ENCODE measurements at regions of chr6 and their contacts with region 1.

Region 1: DNA sequence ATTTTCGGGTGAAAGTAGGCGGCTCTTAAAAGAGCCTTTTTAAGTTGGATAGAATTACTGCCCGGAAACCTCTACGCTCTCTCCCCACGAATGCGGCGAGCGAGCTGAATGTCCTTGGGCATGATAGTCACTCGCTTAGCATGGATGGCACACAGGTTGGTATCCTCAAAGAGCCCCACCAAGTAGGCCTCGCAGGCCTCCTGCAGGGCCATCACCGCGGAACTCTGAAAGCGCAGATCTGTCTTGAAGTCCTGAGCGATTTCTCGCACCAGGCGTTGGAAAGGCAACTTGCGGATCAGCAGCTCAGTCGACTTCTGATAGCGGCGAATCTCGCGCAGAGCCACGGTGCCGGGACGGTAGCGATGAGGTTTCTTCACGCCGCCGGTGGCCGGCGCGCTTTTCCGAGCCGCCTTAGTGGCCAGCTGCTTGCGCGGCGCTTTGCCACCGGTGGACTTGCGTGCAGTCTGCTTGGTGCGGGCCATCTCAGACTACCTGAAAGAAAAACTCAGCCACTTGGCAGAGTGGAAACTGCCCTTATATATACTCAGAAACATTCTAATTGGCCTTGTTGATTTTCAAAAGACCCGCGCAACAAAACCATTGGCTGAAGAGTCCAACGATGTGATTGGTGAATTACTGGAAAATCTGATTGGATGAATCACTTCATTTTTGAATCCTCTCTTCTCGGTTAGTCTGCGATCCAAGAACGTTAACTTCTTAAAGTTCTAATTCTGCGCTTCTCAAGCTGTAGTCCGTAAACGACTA is 93.9 kb upstream of the BTN3A2 start:
- DNase-seq: peak; percentile 87
- H3K4me3 ChIP-seq: peak overlapping the region; percentile 66 to 75
- H3K27ac ChIP-seq: peak overlapping the region; percentile 84 to 99
- H3K4me1 ChIP-seq: peaks cover 0 to 14% of the 10 kb centered on the region in 2 experiments; a peak in 2 of 4 replicates
- H3K27me3 ChIP-seq: no peaks in the 10 kb centered on the region
- CTCF ChIP-seq: no peak
- EP300 ChIP-seq: peak in 1 of 2 experiments; percentile 40; a peak in 1 of 4 replicates
- RAD21 ChIP-seq: no peak

Region 2: GRCh38 chr6:26020329-26021000 is 250.6 kb before region 1 on chr6:
- CTCF ChIA-PET with region 1: no interaction called
- POLR2A ChIA-PET with region 1: interaction called, 11 read pairs
- DNase-seq: peak; percentile 87
- H3K4me3 ChIP-seq: peak overlapping the region; percentile 78 to 84
- H3K27ac ChIP-seq: peak overlapping the region; percentile 93 to 99
- H3K4me1 ChIP-seq: peaks cover 0 to 19% of the 10 kb centered on the region in 2 experiments; a peak in 2 of 4 replicates
- H3K27me3 ChIP-seq: no peaks in the 10 kb centered on the region
- CTCF ChIP-seq: no peak
- EP300 ChIP-seq: no peak
- RAD21 ChIP-seq: no peak

Region 3: GRCh38 chr6:26103770-26104456 is 167.2 kb before region 1 on chr6:
- CTCF ChIA-PET with region 1: no interaction called
- POLR2A ChIA-PET with region 1: interaction called, 13 read pairs
- DNase-seq: peak; percentile 69
- H3K4me3 ChIP-seq: peak overlapping the region; percentile 55 to 65
- H3K27ac ChIP-seq: peak overlapping the region; percentile 85 to 97
- H3K4me1 ChIP-seq: peaks cover 7 to 17% of the 10 kb centered on the region in 2 experiments
- H3K27me3 ChIP-seq: no peaks in the 10 kb centered on the region
- CTCF ChIP-seq: peak; percentile 62
- EP300 ChIP-seq: peak; percentile 91 to 97
- RAD21 ChIP-seq: no peak

Region 4: GRCh38 chr6:26196846-26197648 is 74.0 kb before region 1 on chr6:
- CTCF ChIA-PET with region 1: no interaction called
- POLR2A ChIA-PET with region 1: interaction called, 29 read pairs
- DNase-seq: peak; percentile 81
- H3K4me3 ChIP-seq: peak overlapping the region; percentile 84 to 96
- H3K27ac ChIP-seq: peak overlapping the region; percentile 87 to 94
- H3K4me1 ChIP-seq: peaks cover 12 to 16% of the 10 kb centered on the region in 2 experiments; a peak in 3 of 4 replicates
- H3K27me3 ChIP-seq: no peaks in the 10 kb centered on the region
- CTCF ChIP-seq: peak; percentile 19; the same call in 1 of the 2 replicates
- EP300 ChIP-seq: peak in 1 of 2 experiments; percentile 43; a peak in 1 of 4 replicates
- RAD21 ChIP-seq: no peak

Region 5: GRCh38 chr6:26223650-26224546 is 47.2 kb before region 1 on chr6:
- CTCF ChIA-PET with region 1: interaction called, 9 read pairs
- POLR2A ChIA-PET with region 1: interaction called, 107 read pairs
- DNase-seq: peak; percentile 36
- H3K4me3 ChIP-seq: peak overlapping the region; percentile 72 to 80
- H3K27ac ChIP-seq: peak overlapping the region; percentile 99 to 100
- H3K4me1 ChIP-seq: peaks cover 8 to 18% of the 10 kb centered on the region in 2 experiments; a peak in 3 of 4 replicates
- H3K27me3 ChIP-seq: no peaks in the 10 kb centered on the region
- CTCF ChIP-seq: no peak; the same call in 1 of the 2 replicates
- EP300 ChIP-seq: 0 out of 4 replicates have a peak, but pooled peaks of 1 of the 2 experiments have one; percentile 3
- RAD21 ChIP-seq: no peak

Region 6: DNA sequence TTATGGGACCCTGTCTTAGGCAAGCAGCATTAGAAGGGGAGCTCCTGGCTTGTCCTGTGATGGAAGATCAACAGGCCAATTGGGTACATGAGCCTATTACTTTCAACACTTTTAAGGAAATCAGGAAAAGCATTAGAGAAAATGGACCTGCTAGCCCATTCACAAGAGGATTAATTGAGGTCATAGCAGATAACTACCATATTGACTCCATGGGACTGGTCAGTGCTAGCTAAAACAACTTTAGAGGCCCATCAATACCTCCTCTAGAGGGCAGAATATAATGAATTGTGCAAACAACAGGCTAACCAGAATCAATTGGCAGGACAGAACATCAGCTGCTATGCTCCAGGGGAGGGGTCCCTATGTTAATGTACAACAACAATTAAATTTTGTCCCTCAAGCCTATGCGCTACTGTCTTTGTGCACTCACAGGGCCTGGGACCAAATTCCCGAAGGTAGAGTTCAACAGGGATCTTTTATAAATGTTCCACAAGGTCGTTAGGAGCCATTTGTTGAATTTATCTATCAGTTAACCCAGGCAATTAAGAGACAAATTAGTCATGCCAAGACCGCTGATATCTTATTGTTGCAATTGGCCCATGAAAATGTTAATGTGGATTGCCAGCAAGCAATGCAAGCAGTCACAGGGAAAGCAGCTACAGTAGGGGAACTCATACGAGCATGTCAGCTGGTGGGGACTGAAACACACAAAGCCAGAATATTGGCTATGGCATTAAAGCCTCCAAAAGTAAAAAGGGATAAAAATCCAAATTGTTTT is 12.7 kb before region 1 on chr6:
- CTCF ChIA-PET with region 1: interaction called, 13 read pairs
- POLR2A ChIA-PET with region 1: interaction called, 21 read pairs
- DNase-seq: no peak
- H3K4me3 ChIP-seq: no peak overlapping the region
- H3K27ac ChIP-seq: no peak overlapping the region; a peak in 1 of 4 replicates
- H3K4me1 ChIP-seq: peaks cover 0 to 15% of the 10 kb centered on the region in 2 experiments; a peak in 2 of 4 replicates
- H3K27me3 ChIP-seq: no peaks in the 10 kb centered on the region
- CTCF ChIP-seq: peak; percentile 44
- EP300 ChIP-seq: no peak
- RAD21 ChIP-seq: no peak

Region 7: DNA sequence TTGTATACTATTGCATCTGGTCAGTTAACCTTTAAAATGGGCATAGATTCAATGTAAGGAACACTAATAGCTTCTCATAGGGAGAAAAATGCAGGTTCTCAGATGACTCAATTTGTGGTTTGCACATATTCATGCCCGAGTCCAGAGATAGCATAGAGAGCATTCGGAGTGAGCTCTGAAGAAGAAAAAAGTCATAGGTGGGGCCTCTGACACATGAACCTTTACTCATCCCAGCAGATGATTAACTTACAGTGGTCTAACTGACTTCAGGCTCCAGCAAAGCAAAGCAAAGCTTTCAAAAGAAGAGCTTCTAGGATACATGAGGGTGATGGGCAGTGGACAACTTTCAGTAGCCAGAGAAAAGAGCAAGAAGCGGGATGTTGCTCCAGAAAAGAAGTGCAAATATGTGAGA is 38.7 kb after region 1 on chr6:
- CTCF ChIA-PET with region 1: interaction called, 3 read pairs
- POLR2A ChIA-PET with region 1: interaction called, 11 read pairs
- DNase-seq: no peak
- H3K4me3 ChIP-seq: no peak overlapping the region; a peak in 1 of 4 replicates
- H3K27ac ChIP-seq: peak overlapping the region in 1 of 2 experiments; percentile 74; a peak in 2 of 4 replicates
- H3K4me1 ChIP-seq: peaks cover 0 to 6% of the 10 kb centered on the region in 2 experiments; a peak in 3 of 4 replicates
- H3K27me3 ChIP-seq: no peaks in the 10 kb centered on the region
- CTCF ChIP-seq: no peak
- EP300 ChIP-seq: peak in 1 of 2 experiments; percentile 82; a peak in 1 of 4 replicates
- RAD21 ChIP-seq: no peak